Ascending aorta (tissue), 2 donors: ENCODE measurements at regions of chr2 and their contacts with region 1.

Region 1: GRCh38 chr2:182980115-182980514 is 58.1 kb downstream of the NCKAP1 start:
- DNase-seq: no peak
- H3K4me3 ChIP-seq: no peak overlapping the region
- H3K27ac ChIP-seq: no peak overlapping the region
- H3K4me1 ChIP-seq: no peaks in the 10 kb centered on the region
- H3K27me3 ChIP-seq: no peaks in the 10 kb centered on the region
- CTCF ChIP-seq: peak; percentile 47 to 62 (median 60)

Region 2: GRCh38 chr2:182767578-182767977 is 212.5 kb before region 1 on chr2:
- intact Hi-C with region 1: loop called (anchors 5 kb)
- DNase-seq: no peak
- H3K4me3 ChIP-seq: no peak overlapping the region
- H3K27ac ChIP-seq: no peak overlapping the region
- H3K4me1 ChIP-seq: no peaks in the 10 kb centered on the region
- H3K27me3 ChIP-seq: no peaks in the 10 kb centered on the region
- CTCF ChIP-seq: peak in 2 of 3 experiments; percentile 10 to 29

Region 3: DNA sequence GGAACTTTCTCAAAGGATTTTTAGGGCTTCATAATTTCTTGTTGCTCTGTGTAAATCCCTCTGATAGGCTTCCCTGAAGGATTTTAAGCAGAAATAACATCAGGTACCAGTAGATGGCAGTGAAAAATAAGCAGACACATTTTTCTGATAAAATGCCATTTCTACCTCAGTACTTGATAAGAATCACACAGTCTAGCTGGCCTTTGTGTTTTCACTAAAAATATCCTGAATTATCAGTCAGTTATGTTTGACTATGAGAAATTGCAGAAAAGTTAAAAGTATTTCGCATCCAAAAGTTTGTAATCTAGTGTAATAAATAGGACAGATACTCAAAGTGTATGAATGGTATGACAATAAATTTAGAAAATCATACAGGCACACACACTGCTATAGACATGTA is 195.3 kb before region 1 on chr2:
- intact Hi-C with region 1: loop called (anchors 1 kb)
- DNase-seq: no peak
- H3K4me3 ChIP-seq: no peak overlapping the region
- H3K27ac ChIP-seq: no peak overlapping the region
- H3K4me1 ChIP-seq: no peaks in the 10 kb centered on the region
- H3K27me3 ChIP-seq: no peaks in the 10 kb centered on the region
- CTCF ChIP-seq: peak; percentile 18 to 70 (median 54)

Region 4: GRCh38 chr2:182920631-182921056 is 59.5 kb before region 1 on chr2:
- intact Hi-C with region 1: loop called (anchors 5 kb)
- DNase-seq: no peak
- H3K4me3 ChIP-seq: no peak overlapping the region
- H3K27ac ChIP-seq: no peak overlapping the region
- H3K4me1 ChIP-seq: peaks cover 0 to 11% of the 10 kb centered on the region in 2 donors
- H3K27me3 ChIP-seq: no peaks in the 10 kb centered on the region
- CTCF ChIP-seq: no peak

Region 5: DNA sequence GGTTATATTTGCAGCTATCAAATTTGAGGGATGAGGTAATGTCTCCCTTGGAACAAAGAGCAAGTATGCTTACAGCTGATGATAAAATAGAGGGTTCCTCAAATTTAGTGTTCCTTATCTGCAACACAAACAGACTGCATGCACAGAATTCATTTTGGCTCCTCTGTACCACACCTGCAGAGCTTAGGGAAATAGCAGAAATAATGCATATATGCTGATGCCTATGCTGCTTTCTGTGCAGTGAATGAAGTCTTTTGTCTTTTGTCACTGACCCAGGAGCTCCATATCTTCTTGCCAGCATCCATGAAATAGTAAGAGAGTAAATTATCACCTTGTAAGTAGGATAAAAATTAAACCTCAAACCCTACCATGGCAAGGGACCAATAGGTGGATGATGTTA is 11.6 kb before region 1 on chr2:
- intact Hi-C with region 1: no loop called
- DNase-seq: no peak
- H3K4me3 ChIP-seq: no peak overlapping the region
- H3K27ac ChIP-seq: no peak overlapping the region
- H3K4me1 ChIP-seq: no peaks in the 10 kb centered on the region
- H3K27me3 ChIP-seq: no peaks in the 10 kb centered on the region
- CTCF ChIP-seq: no peak

Region 6: DNA sequence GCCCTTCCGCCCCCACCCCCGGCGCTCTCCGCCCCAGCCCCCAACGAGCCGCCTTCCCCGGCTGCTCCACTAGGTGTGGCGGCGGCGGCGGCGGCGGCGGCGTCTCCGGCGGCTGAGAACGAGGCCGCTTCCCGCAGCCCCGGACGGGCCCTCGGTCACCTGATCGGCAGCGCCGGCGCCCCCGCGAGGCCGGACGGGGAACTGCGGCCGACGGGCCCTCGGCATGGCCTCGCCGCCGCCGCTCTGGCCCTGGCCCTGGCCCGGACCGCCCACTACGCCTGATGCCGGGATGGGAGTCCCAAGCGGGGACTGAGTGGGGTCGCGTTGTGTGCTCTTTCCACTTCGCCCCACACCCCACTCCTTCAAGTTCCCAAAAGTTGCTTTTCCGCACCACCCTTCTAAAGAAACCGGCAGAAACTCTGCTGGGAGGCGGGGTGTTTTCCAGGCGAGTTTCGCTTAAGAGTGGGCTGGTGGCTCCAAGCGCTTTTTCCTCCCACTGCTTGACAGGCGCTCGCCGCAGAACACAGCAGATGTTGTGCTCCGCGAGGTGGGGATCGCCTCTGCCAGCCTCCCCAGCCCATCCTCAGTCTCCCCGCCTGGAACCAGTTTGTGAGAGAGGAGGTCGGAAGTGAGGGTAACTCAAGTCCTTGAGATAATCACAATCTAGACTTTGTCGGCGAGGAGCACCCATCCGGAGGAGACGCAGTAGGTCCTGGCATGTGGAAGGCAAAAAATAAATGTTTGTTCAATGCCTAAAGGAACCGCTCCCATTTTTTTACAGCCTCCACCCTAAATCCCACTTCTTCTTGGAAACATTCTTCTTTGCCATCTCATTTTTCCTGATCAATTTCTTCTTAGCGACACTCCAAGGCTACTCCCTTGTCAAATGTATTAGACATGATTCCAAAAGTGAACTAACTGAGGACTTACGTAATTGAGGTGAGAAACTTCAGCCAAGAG is 58.5 kb after region 1 on chr2 and contains the start of gene NCKAP1:
- intact Hi-C with region 1: loop called (anchors 5 kb)
- DNase-seq: peak; percentile 54 to 95
- H3K4me3 ChIP-seq: peak within 1 kb of the TSS; percentile 87 to 95
- H3K27ac ChIP-seq: peak within 1 kb of the TSS; percentile 99 to 100
- H3K4me1 ChIP-seq: peaks cover 0 to 22% of the 10 kb centered on the region in 2 donors
- H3K27me3 ChIP-seq: no peaks in the 10 kb centered on the region
- CTCF ChIP-seq: peak; percentile 45 to 97 (median 75)
- total RNA-seq, gene NCKAP1: 55.7 TPM

Region 7: DNA sequence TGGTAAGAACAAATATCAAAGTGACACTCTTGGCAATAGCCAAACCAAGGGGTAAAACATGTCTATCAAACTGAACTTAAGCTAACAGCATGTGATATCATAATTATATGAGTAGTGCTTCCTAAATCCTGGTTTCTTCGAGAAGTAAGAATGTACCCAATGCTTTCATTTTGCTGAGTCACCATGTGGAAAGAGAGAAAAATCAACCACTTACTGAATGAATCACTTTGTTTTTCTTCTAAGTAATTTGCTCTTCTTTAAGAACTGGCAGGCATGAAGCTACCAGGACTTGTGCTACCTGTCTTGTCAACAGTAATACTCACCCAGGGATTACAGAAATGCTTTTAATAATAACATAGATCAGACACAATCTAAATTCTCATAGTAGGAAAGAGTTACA is 79.4 kb after region 1 on chr2:
- intact Hi-C with region 1: no loop called
- DNase-seq: no peak
- H3K4me3 ChIP-seq: no peak overlapping the region
- H3K27ac ChIP-seq: peak overlapping the region in 1 of 2 donors; percentile 52
- H3K4me1 ChIP-seq: no peaks in the 10 kb centered on the region
- H3K27me3 ChIP-seq: no peaks in the 10 kb centered on the region
- CTCF ChIP-seq: no peak